K562 (cell line): ENCODE measurements at regions of chr4 and their contacts with region 1.

Region 1: GRCh38 chr4:80007745-80008149 is 65.3 kb downstream of the ANTXR2 start:
- DNase-seq: peak in 2 of 4 experiments; percentile 13 to 27
- ATAC-seq: peak; percentile 13; the same call in 2 of the 3 replicates
- H3K4me3 ChIP-seq: no peak overlapping the region
- H3K27ac ChIP-seq: peak overlapping the region; percentile 92
- H3K4me1 ChIP-seq: peaks cover 0 to 39% of the 10 kb centered on the region in 2 experiments; a peak in 3 of 5 replicates
- H3K27me3 ChIP-seq: no peaks in the 10 kb centered on the region
- CTCF ChIP-seq: no peak
- EP300 ChIP-seq: peak; percentile 11; the same call in 1 of the 2 replicates
- POLR2A ChIP-seq: no peak
- RAD21 ChIP-seq: no peak

Region 2: DNA sequence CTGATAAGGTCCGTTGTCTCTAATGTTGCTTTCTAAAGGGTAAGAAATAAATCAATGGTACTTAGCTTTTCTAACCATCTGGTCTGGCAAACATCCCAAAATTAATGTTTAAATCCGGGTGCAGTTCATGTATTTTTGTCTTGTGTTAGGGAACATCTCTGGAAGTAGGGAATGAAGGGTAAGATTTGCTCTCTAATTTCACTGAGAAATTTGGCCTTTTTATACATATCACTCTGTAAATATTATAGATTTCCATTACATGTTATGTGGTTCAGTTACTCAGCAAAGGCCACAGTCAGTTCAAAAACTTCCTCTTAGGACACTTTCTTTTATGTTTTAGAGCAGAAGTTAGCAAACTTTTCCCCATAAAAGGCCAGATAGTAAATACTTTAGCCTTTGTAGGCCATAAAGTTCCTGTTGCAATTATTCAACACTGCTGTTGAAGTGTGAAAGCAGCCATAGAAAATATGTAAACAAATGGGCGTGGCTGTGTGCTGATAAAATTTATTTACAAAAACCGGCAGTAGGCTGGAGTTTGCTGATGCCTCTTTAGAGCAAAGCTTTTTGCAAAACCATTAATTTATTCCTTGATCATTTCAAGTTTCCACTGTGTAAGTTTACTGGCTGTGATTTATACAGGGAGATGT is 152.8 kb before region 1 on chr4:
- CTCF ChIA-PET with region 1: no interaction called
- POLR2A ChIA-PET with region 1: no interaction called
- in situ Hi-C with region 1: no loop called
- intact Hi-C with region 1: no loop called
- DNase-seq: no peak
- ATAC-seq: no peak
- H3K4me3 ChIP-seq: no peak overlapping the region
- H3K27ac ChIP-seq: no peak overlapping the region
- H3K4me1 ChIP-seq: peaks cover 0 to 7% of the 10 kb centered on the region in 2 experiments; a peak in 3 of 5 replicates
- H3K27me3 ChIP-seq: no peaks in the 10 kb centered on the region
- CTCF ChIP-seq: no peak
- EP300 ChIP-seq: no peak
- POLR2A ChIP-seq: no peak
- RAD21 ChIP-seq: no peak

Region 3: DNA sequence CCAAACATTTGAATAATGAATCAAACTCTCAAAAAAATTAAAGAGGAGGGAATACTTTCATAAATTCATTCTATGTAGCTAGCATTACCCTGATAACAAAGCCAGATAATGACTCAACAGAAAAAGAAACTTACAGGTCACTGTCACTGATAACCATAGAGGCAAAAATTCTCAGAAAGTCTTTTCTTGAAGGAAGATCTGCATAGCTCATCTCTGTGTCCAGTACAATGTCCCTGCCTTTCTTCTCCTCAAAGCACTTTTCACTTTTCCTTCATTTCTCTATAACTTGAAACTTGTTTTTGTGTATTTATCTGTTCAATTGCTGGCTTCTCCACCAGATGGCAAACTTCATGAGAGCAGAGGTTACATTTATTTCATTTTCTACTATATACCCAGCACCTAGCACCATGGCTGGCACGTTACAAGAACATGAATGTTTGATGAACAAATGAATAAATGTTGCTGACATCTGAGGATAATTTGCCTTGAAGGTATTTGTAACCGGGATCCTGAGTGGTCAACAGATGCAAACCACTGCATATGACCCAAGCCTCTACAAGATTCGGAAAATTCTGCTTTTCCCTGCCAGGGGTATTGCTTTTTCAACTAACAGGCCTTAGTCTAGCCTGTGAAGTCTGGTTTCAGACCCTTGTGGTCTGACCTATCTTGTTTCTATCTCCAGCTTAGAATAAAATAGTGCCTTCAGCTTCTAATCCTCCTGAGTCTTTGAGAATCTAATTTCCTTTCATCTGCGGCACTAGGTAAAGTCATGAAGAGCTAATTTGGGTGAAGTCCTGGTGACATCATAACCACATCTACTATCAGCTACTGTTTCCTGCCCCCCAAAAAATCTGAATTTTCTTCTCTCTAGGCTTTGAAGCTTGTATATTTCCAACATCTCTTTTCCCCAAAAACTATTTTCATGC is 117.8 kb after region 1 on chr4:
- CTCF ChIA-PET with region 1: no interaction called
- POLR2A ChIA-PET with region 1: no interaction called
- in situ Hi-C with region 1: no loop called
- intact Hi-C with region 1: loop called (anchors 5 kb)
- DNase-seq: peak; percentile 28 to 76 (median 44)
- ATAC-seq: peak; percentile 74
- H3K4me3 ChIP-seq: peak overlapping the region; percentile 36
- H3K27ac ChIP-seq: peak overlapping the region; percentile 90
- H3K4me1 ChIP-seq: peaks cover 0 to 37% of the 10 kb centered on the region in 2 experiments; a peak in 4 of 5 replicates
- H3K27me3 ChIP-seq: no peaks in the 10 kb centered on the region
- CTCF ChIP-seq: peak; percentile 37 to 59 (median 50); a peak in 5 of 6 replicates
- EP300 ChIP-seq: peak; percentile 85; the same call in 1 of the 2 replicates
- POLR2A ChIP-seq: no peak
- RAD21 ChIP-seq: peak; percentile 52 to 57; a peak in 3 of 4 replicates

Region 4: GRCh38 chr4:80142394-80143306 is 134.9 kb after region 1 on chr4:
- CTCF ChIA-PET with region 1: no interaction called
- POLR2A ChIA-PET with region 1: no interaction called
- in situ Hi-C with region 1: no loop called
- intact Hi-C with region 1: loop called (anchors 5 kb)
- DNase-seq: peak in 3 of 4 experiments; percentile 38 to 76 (median 47)
- ATAC-seq: peak; percentile 51
- H3K4me3 ChIP-seq: no peak overlapping the region
- H3K27ac ChIP-seq: peak overlapping the region; percentile 75; the same call in 2 of the 3 replicates
- H3K4me1 ChIP-seq: peaks cover 8 to 66% of the 10 kb centered on the region in 2 experiments
- H3K27me3 ChIP-seq: no peaks in the 10 kb centered on the region
- CTCF ChIP-seq: no peak
- EP300 ChIP-seq: no peak; the same call in 1 of the 2 replicates
- POLR2A ChIP-seq: no peak
- RAD21 ChIP-seq: no peak

Region 5: DNA sequence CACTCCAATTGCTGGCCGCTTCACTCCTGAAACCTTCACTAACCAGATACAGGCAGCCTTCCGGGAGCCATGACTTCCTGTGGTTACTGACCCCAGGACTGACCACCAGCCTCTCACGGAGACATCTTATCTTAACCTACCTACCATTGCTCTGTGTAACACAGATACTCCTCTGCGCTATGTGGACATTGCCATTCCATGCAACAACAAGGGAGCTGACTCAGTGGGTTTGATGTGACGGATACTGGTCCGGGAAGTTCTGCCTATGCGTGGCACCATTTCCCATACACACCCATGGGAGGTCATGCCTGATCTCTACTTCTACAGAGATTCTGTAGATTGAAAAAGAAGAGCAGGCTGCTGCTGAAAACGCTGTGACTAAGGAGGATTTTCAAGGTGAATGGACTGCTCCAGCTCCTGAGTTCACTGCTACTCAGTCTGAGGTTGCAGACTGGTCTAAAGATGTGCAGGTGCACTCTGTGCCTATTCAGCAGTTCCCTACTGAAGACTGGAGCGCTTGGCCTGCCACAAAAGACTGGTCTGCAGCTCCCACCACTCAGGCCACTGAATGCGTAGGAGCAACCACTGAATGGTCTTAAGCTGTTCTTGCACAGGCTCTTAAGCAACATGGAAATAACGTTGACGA is 153.8 kb after region 1 on chr4:
- CTCF ChIA-PET with region 1: no interaction called
- POLR2A ChIA-PET with region 1: no interaction called
- in situ Hi-C with region 1: no loop called
- intact Hi-C with region 1: no loop called
- DNase-seq: peak in 2 of 4 experiments; percentile 67 to 83
- ATAC-seq: peak; percentile 64
- H3K4me3 ChIP-seq: 0 out of 2 replicates have a peak overlapping the region, but pooled peaks have one; percentile 14
- H3K27ac ChIP-seq: peak overlapping the region; percentile 77
- H3K4me1 ChIP-seq: peaks cover 0 to 15% of the 10 kb centered on the region in 2 experiments; a peak in 4 of 5 replicates
- H3K27me3 ChIP-seq: no peaks in the 10 kb centered on the region
- CTCF ChIP-seq: no peak
- EP300 ChIP-seq: peak; percentile 72; the same call in 1 of the 2 replicates
- POLR2A ChIP-seq: no peak
- RAD21 ChIP-seq: no peak